SK-N-SH (cell line): ENCODE measurements at regions of chr4 and their contacts with region 1.

Region 1: GRCh38 chr4:152380185-152380584 is 155.7 kb downstream of the FBXW7 start:
- DNase-seq: no peak
- H3K4me3 ChIP-seq: no peak overlapping the region
- H3K27ac ChIP-seq: no peak overlapping the region
- H3K4me1 ChIP-seq: no peaks in the 10 kb centered on the region; a peak in 1 of 4 replicates
- H3K27me3 ChIP-seq: no peaks in the 10 kb centered on the region
- CTCF ChIP-seq: no peak
- EP300 ChIP-seq: no peak
- RAD21 ChIP-seq: no peak

Region 2: DNA sequence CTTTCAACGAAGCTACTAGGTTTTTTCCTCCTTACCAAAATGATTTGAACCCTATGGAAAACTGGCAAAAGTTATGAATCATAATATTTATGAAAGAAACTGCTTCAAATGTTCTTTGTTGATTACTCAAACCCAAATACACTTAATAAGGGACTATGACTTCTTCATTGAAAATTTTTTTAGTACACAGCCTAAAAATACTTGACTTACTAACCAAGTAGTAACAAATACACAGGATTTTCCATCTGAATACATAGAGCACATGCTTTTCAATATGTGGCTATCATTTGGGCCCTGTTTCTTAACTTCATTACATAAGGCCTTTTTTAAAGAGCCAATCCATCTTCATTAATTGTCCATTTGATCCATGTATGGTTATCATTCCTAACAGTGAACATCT is 15.8 kb before region 1 on chr4:
- CTCF ChIA-PET with region 1: no interaction called
- POLR2A ChIA-PET with region 1: no interaction called
- DNase-seq: no peak
- H3K4me3 ChIP-seq: no peak overlapping the region
- H3K27ac ChIP-seq: no peak overlapping the region
- H3K4me1 ChIP-seq: peaks cover 0 to 12% of the 10 kb centered on the region in 2 experiments; a peak in 1 of 4 replicates
- H3K27me3 ChIP-seq: no peaks in the 10 kb centered on the region
- CTCF ChIP-seq: no peak
- EP300 ChIP-seq: no peak
- RAD21 ChIP-seq: no peak

Region 3: DNA sequence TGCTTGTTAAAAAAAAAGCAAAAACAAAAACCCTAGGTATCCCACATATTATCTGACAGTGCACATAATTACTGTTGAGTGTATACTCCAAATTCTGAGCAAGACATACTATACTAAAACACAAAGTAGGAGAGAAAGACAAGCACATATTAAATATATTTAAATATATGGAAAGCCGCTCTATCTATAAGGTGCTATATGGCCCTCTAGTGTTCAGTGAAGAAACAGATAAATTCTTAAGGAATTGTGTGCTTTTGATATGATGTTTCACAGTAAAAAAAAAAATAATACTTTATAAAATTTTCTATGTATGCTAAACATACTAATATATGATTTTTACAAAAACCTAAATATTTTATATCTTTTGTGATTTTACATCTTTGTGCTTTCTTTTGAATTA is 17.9 kb after region 1 on chr4:
- CTCF ChIA-PET with region 1: interaction called, 10 read pairs
- POLR2A ChIA-PET with region 1: no interaction called
- DNase-seq: peak; percentile 22
- H3K4me3 ChIP-seq: no peak overlapping the region
- H3K27ac ChIP-seq: no peak overlapping the region
- H3K4me1 ChIP-seq: no peaks in the 10 kb centered on the region; a peak in 1 of 4 replicates
- H3K27me3 ChIP-seq: no peaks in the 10 kb centered on the region
- CTCF ChIP-seq: peak; percentile 63
- EP300 ChIP-seq: no peak
- RAD21 ChIP-seq: peak; percentile 59